Activated CD8-positive, alpha-beta T cell treated with anti-CD3 and anti-CD28 coated beads for 36 hours (primary cell): ENCODE measurements at regions of chr1 and their contacts with region 1.

Region 1: DNA sequence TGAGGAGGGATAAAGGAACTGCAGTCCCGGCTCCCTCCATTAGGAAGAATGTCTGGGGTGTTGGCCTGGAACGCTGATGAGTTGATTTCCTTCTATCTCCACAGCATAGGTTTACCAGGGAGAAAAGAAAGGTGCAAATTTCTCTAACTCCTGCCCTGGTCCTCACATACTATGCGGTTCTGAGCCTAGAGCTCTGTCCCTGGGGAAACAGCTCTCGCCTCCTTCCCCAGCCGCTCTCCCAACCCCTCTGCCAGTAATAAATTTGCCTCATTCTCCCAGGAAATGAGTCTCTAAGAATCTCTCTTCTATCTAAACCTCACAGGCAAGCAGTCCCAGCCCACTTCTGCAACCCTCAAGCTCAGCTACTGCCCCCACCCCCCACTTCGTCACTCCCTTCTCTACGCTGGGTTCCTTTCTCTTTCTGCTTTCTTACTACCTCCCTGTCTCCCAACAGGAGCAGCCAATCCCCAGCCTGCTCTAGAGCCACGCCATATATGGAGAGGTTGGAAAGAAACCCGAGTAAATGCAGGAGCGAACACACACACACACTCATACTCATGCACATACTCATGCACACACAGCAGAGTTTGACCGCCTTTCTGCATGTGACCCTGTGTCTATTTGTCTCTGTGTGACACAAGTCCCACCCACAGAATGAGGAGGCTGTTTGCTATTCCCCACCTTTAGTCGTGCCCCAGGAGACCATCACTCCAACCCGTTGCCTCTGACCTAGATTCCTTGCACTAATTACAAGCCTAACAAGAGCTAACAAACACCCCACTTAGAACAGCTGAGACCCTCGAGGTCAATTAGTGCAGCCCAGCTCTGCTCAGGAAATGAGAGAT is 13.4 kb downstream of the PLEKHO1 start:
- DNase-seq: peak; percentile 63
- ATAC-seq: peak; percentile 57
- H3K4me3 Mint-ChIP-seq: peak overlapping the region; percentile 13
- H3K27ac Mint-ChIP-seq: peak overlapping the region; percentile 25
- H3K4me1 Mint-ChIP-seq: peaks cover 46% of the 10 kb centered on the region
- H3K27me3 Mint-ChIP-seq: no peaks in the 10 kb centered on the region
- CTCF ChIP-seq: no peak

Region 2: DNA sequence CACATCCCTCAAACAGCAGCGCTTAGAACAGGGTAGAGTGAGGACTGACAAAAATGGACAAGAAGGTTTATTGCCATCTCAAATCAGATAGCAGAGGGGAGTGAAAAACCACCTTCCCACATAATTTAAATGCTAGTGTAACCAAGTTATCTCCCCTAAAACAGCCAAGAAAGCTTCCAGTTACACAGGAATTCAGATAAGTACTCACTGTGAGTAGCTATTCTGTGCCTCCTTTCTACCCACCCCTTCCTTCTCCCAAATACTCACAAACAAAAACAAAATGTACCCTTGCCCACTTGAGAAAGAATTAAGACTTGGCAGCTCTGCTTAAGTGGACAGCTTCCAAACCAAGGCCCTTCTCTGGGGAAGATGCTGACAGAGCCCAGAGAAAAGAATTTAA is 161.7 kb before region 1 on chr1:
- CTCF ChIA-PET with region 1: no interaction called
- POLR2A ChIA-PET with region 1: no interaction called
- intact Hi-C with region 1: no loop called
- DNase-seq: no peak
- ATAC-seq: no peak
- H3K4me3 Mint-ChIP-seq: no peak overlapping the region
- H3K27ac Mint-ChIP-seq: no peak overlapping the region
- H3K4me1 Mint-ChIP-seq: peaks cover 66% of the 10 kb centered on the region
- H3K27me3 Mint-ChIP-seq: no peaks in the 10 kb centered on the region
- CTCF ChIP-seq: no peak

Region 3: DNA sequence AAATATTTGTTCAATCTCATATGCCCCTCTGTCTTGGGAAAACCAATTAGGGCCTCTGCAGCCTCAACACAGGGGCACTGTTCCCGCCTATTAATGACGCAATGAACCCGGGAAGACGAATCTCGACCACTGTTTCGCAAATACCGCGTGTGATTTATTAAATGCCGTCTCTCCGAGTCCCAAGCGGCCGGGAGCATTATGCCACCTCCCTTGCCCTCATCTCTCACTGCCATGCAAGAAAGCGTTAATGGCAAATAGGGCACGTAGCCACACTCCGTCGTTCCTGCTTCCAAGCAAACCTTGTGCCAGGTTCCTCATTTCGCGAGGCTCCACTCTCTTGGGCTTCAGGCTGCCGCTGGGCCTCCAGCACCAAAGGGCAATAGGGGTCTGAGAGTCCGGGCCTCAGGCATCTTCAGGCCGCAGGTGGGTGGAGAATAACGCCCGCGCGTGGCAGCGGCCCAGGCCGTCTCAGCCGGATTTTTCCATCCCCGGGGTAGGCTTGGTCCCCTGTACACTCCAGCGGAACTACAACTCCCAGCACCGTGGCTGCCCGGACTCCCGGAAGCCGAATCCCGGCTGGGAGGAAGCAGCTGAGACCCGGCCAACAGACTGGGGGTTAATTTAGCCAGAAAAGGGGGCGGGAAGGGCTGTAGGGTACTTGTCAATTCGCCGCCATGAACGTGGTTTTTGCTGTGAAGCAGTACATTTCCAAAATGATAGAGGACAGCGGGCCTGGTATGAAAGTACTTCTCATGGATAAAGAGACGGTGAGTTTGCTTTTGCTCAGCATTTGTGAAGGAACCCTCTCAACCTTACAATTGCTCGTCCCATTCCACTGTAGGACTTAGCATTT is 95.7 kb before region 1 on chr1 and contains the start of gene VPS45:
- CTCF ChIA-PET with region 1: interaction called, 118 read pairs
- POLR2A ChIA-PET with region 1: interaction called, 3 read pairs
- intact Hi-C with region 1: loop called (anchors 2 kb)
- DNase-seq: peak; percentile 94
- ATAC-seq: peak; percentile 97
- H3K4me3 Mint-ChIP-seq: peak within 1 kb of the TSS; percentile 96
- H3K27ac Mint-ChIP-seq: peak within 1 kb of the TSS; percentile 98
- H3K4me1 Mint-ChIP-seq: peaks cover 27% of the 10 kb centered on the region
- H3K27me3 Mint-ChIP-seq: no peaks in the 10 kb centered on the region
- CTCF ChIP-seq: no peak
- total RNA-seq, gene VPS45: 19.4 to 22.8 TPM

Region 4: GRCh38 chr1:150072959-150073358 is 90.1 kb before region 1 on chr1:
- CTCF ChIA-PET with region 1: interaction called, 118 read pairs
- POLR2A ChIA-PET with region 1: interaction called, 5 read pairs
- intact Hi-C with region 1: loop called (anchors 2 kb)
- DNase-seq: no peak
- ATAC-seq: peak; percentile 51
- H3K4me3 Mint-ChIP-seq: no peak overlapping the region
- H3K27ac Mint-ChIP-seq: no peak overlapping the region
- H3K4me1 Mint-ChIP-seq: peaks cover 27% of the 10 kb centered on the region
- H3K27me3 Mint-ChIP-seq: no peaks in the 10 kb centered on the region
- CTCF ChIP-seq: peak; percentile 62

Region 5: DNA sequence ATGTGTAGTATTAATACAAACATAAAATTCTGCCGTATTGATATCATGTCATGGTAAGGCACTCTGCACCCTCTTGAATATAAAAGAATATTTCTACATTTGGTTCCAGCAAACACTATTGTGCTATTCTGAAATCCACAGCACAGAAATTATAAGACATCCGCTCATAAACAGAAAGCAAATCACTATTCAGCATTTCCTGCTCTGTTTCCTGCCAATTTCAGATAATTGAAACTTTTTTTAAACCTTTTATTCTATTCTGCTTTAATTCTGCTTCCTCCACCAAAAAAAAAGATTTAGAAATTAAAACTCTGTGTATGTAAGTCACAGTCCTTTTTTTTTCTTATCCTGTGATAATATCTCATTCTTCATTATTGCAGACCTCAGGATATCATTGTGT is 53.0 kb before region 1 on chr1:
- CTCF ChIA-PET with region 1: interaction called, 4 read pairs
- POLR2A ChIA-PET with region 1: interaction called, 3 read pairs
- intact Hi-C with region 1: loop called (anchors 5 kb)
- DNase-seq: no peak
- ATAC-seq: peak; percentile 42
- H3K4me3 Mint-ChIP-seq: peak overlapping the region; percentile 42
- H3K27ac Mint-ChIP-seq: peak overlapping the region; percentile 85
- H3K4me1 Mint-ChIP-seq: peaks cover 61% of the 10 kb centered on the region
- H3K27me3 Mint-ChIP-seq: no peaks in the 10 kb centered on the region
- CTCF ChIP-seq: no peak

Region 6: DNA sequence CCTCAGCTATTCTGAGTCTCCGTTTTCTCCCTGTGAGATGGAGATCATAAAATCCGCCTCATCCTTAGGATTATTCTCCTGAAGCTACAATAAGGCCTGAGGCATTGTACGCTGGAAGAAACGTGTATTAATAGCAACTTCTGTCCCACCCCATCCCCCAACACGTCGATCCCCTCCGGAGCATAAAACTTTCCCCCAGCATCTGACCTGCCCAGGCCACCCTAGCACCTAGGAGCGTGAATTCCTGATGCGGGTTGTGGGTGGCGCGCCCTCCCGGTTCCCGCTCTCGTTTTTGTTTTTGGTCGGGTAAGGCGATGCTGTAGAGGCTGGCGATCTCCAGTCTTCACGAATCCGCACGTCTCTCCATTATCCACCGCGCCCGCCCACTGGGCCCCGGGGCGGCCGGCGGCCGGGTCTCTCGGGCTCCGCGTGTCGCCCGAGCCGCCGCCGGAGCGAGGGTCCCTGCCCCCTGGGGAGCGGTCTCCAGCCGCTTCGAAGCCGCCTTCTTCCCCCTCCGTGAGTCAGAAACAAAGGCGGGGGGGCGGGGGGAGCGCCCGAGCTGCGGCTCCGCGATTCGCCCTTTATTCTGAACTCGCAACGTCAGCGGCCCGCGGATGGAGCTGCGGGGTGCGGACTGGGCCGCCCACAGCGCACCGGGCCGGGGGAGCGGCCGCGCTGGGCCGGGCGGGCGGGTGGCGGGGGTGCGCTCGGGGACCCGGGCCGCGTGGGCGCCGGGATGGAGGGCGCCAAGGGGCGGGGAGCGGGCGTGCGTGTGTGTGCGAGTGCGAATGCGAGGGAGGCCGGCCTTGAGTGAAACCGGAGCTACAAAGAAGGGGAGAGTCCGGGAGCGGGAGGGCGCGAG is 13.6 kb before region 1 on chr1 and contains the start of gene PLEKHO1:
- CTCF ChIA-PET with region 1: interaction called, 11 read pairs
- POLR2A ChIA-PET with region 1: interaction called, 8 read pairs
- intact Hi-C with region 1: loop called (anchors 2 kb)
- DNase-seq: peak; percentile 87
- ATAC-seq: peak; percentile 71
- H3K4me3 Mint-ChIP-seq: peak within 1 kb of the TSS; percentile 83
- H3K27ac Mint-ChIP-seq: peak within 1 kb of the TSS; percentile 89
- H3K4me1 Mint-ChIP-seq: peaks cover 59% of the 10 kb centered on the region
- H3K27me3 Mint-ChIP-seq: peaks cover 1% of the 10 kb centered on the region
- CTCF ChIP-seq: no peak
- total RNA-seq, gene PLEKHO1: 18.2 to 19.0 TPM

Region 7: DNA sequence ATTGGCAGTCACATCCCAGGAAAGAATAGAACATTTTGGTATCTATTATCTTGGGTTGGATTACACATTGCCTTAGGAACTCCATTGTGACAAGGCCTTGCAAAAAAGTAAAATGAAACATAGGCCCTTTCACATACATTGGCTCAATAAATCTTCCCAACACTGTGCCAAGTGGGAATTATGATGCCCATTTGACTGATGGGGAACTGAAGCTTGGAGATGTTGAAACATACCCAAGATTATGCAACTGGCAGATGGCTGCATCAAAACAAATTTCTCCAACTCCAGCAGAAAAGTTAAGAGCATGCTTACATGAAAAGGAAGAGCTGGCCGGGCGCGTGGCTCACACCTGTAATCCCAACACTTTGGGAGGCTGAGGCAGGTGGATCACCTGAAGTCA is 13.5 kb after region 1 on chr1:
- CTCF ChIA-PET with region 1: interaction called, 17 read pairs
- POLR2A ChIA-PET with region 1: interaction called, 3 read pairs
- intact Hi-C with region 1: no loop called
- DNase-seq: no peak
- ATAC-seq: no peak
- H3K4me3 Mint-ChIP-seq: no peak overlapping the region
- H3K27ac Mint-ChIP-seq: no peak overlapping the region
- H3K4me1 Mint-ChIP-seq: no peaks in the 10 kb centered on the region
- H3K27me3 Mint-ChIP-seq: no peaks in the 10 kb centered on the region
- CTCF ChIP-seq: no peak

Region 8: GRCh38 chr1:150186789-150187559 is 23.9 kb after region 1 on chr1:
- CTCF ChIA-PET with region 1: interaction called, 19 read pairs
- POLR2A ChIA-PET with region 1: interaction called, 3 read pairs
- intact Hi-C with region 1: no loop called
- DNase-seq: peak; percentile 34
- ATAC-seq: peak; percentile 79
- H3K4me3 Mint-ChIP-seq: peak overlapping the region; percentile 44
- H3K27ac Mint-ChIP-seq: peak overlapping the region; percentile 57
- H3K4me1 Mint-ChIP-seq: peaks cover 13% of the 10 kb centered on the region
- H3K27me3 Mint-ChIP-seq: no peaks in the 10 kb centered on the region
- CTCF ChIP-seq: peak; percentile 87